ENCODE measurements at regions of chr19 and their contacts with region 1.

Region 1: DNA sequence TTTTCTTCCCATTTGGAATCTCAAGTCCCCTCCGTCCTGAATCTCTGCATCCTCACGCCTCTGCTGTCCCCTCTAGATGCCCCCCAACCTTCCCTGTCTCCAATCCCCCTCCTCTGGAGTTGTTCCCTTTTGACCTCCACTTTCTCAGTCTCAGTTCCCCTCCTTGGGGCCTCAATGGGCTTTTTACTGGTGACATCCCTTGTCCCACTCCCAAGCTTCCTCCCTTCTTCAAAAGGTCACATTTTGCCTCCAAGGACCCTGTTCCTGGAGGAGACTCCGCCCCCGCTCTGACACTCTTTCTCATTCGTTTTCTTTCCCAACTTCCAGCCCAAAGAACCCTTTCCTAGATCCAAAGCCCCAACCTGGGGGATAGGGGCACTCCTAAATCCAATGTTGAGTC is 1.0 kb downstream of the AP2S1 start:
- DNase-seq: no peak
- H3K4me3 ChIP-seq: peak overlapping the region; percentile 97
- CTCF ChIP-seq: no peak

Region 2: GRCh38 chr19:46746281-46747013 is 103.2 kb before region 1 on chr19 and contains the start of gene STRN4:
- in situ Hi-C with region 1: loop called (anchors 5 kb)
- DNase-seq: no peak
- H3K4me3 ChIP-seq: peak within 1 kb of the TSS; percentile 76
- CTCF ChIP-seq: no peak

Region 3: DNA sequence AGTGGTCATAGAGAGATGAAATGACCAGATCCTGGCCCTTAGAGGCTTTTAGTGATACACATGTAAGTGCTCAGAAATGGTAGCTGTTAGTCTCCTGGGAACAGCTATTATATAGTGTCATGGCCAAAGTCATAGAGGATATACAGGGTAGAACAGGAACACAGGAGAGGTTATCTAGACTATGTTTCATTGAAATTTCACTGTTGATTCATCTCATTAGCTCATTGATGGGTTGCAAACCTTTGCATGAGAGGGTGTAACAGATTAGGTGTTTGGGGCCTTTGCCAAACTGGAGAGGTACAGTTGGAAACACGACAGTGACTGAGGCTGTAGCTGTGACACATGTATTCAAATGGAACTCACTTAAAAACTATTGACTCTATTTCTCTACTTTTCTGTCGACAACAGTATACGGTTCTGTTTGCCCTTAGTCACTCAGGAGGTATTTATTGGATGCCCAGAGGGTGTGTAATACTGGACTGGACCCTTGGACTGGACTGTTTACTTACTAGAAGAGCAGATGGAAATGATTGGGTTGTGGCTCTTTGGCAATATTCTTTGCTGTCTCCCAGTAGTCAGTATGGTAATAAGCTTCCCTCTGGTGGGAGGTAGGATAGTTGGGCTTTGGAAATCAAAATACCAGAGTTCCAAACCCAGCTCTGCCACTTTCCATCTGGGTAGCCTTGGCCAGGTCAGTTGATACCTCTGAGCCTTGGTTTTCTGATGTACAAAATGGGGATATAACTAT is 41.0 kb after region 1 on chr19:
- in situ Hi-C with region 1: no loop called
- DNase-seq: peak; percentile 38
- H3K4me3 ChIP-seq: no peak overlapping the region
- CTCF ChIP-seq: no peak